ENCODE measurements at regions of chr9 and their contacts with region 1.

Region 1: GRCh38 chr9:69121828-69122548 is 52.1 kb upstream of the TJP2 start:
- DNase-seq: peak; percentile 68
- H3K4me3 Mint-ChIP-seq: peak overlapping the region; percentile 89
- H3K27ac Mint-ChIP-seq: peak overlapping the region; percentile 73
- H3K4me1 Mint-ChIP-seq: peaks cover 6% of the 10 kb centered on the region
- H3K27me3 Mint-ChIP-seq: no peaks in the 10 kb centered on the region
- CTCF ChIP-seq: no peak

Region 2: GRCh38 chr9:69035438-69036308 is 86.3 kb before region 1 on chr9 and contains the start of gene FXN:
- CTCF ChIA-PET with region 1: interaction called, 3 read pairs
- POLR2A ChIA-PET with region 1: interaction called, 10 read pairs
- intact Hi-C with region 1: no loop called
- DNase-seq: peak; percentile 78
- H3K4me3 Mint-ChIP-seq: peak within 1 kb of the TSS; percentile 94
- H3K27ac Mint-ChIP-seq: peak within 1 kb of the TSS; percentile 92
- H3K4me1 Mint-ChIP-seq: peaks cover 6% of the 10 kb centered on the region
- H3K27me3 Mint-ChIP-seq: no peaks in the 10 kb centered on the region
- CTCF ChIP-seq: peak; percentile 91
- total RNA-seq, gene FXN: 18.4 and 31.6 TPM in 2 replicates

Region 3: GRCh38 chr9:69097064-69097463 is 24.9 kb before region 1 on chr9:
- CTCF ChIA-PET with region 1: interaction called, 5 read pairs
- POLR2A ChIA-PET with region 1: interaction called, 21 read pairs
- intact Hi-C with region 1: no loop called
- DNase-seq: peak; percentile 78
- H3K4me3 Mint-ChIP-seq: no peak overlapping the region
- H3K27ac Mint-ChIP-seq: peak overlapping the region; percentile 83
- H3K4me1 Mint-ChIP-seq: peaks cover 5% of the 10 kb centered on the region
- H3K27me3 Mint-ChIP-seq: no peaks in the 10 kb centered on the region
- CTCF ChIP-seq: no peak

Region 4: GRCh38 chr9:69145144-69145715 is 23.2 kb after region 1 on chr9:
- CTCF ChIA-PET with region 1: no interaction called
- POLR2A ChIA-PET with region 1: interaction called, 12 read pairs
- intact Hi-C with region 1: no loop called
- DNase-seq: no peak
- H3K4me3 Mint-ChIP-seq: no peak overlapping the region
- H3K27ac Mint-ChIP-seq: no peak overlapping the region
- H3K4me1 Mint-ChIP-seq: peaks cover 7% of the 10 kb centered on the region
- H3K27me3 Mint-ChIP-seq: no peaks in the 10 kb centered on the region
- CTCF ChIP-seq: no peak

Region 5: GRCh38 chr9:69174616-69175463 is 52.9 kb after region 1 on chr9:
- CTCF ChIA-PET with region 1: interaction called, 12 read pairs
- POLR2A ChIA-PET with region 1: interaction called, 151 read pairs
- intact Hi-C with region 1: loop called (anchors 2 kb)
- DNase-seq: peak; percentile 96
- H3K4me3 Mint-ChIP-seq: peak overlapping the region; percentile 93
- H3K27ac Mint-ChIP-seq: peak overlapping the region; percentile 94
- H3K4me1 Mint-ChIP-seq: peaks cover 44% of the 10 kb centered on the region
- H3K27me3 Mint-ChIP-seq: no peaks in the 10 kb centered on the region
- CTCF ChIP-seq: no peak

Region 6: DNA sequence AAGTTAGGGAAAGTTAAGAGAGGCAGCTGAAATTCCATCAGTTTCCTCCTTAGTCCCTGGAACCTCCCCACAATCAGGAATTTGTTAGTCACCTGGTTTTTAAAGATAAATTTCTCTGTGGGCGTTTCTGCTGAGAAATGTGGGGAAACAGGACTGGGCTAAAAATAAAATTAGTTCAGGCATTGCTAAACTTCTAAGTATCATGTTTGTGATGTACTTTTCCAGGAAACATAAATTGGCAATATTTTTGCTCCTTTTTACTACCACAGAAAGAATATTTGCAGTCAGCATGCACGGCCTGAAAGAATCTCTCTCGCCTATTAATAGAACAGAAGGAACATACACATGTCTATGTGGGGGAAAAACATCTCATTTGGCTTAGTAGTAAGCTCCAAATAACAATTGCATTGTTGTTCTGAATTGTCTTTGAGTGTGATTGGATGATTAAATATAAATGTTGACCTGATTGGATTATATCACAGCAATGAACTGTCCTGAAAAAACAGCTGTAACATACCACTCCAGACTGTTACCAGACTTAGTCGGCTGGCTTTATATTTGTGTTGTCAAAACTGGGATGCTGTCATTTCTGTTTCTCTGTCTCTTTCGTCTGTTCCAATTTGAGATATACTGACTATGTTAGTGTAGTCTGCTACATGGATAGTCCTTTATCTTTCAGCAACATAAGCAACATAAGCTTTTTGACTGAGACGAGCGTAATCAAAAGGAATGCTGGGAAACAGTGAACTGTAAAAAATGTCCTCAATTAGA is 65.0 kb after region 1 on chr9:
- CTCF ChIA-PET with region 1: interaction called, 17 read pairs
- POLR2A ChIA-PET with region 1: interaction called, 20 read pairs
- intact Hi-C with region 1: no loop called
- DNase-seq: peak; percentile 53
- H3K4me3 Mint-ChIP-seq: no peak overlapping the region
- H3K27ac Mint-ChIP-seq: peak overlapping the region; percentile 62
- H3K4me1 Mint-ChIP-seq: peaks cover 25% of the 10 kb centered on the region
- H3K27me3 Mint-ChIP-seq: no peaks in the 10 kb centered on the region
- CTCF ChIP-seq: no peak